ENCODE measurements at regions of chr1 and their contacts with region 1.

Region 1: GRCh38 chr1:28886731-28887418 is 27.5 kb upstream of the EPB41 start:
- DNase-seq: peak; percentile 92
- H3K4me3 Mint-ChIP-seq: peak overlapping the region; percentile 81
- H3K27ac Mint-ChIP-seq: peak overlapping the region; percentile 92
- H3K4me1 Mint-ChIP-seq: peaks cover 48% of the 10 kb centered on the region
- H3K27me3 Mint-ChIP-seq: no peaks in the 10 kb centered on the region

Region 2: DNA sequence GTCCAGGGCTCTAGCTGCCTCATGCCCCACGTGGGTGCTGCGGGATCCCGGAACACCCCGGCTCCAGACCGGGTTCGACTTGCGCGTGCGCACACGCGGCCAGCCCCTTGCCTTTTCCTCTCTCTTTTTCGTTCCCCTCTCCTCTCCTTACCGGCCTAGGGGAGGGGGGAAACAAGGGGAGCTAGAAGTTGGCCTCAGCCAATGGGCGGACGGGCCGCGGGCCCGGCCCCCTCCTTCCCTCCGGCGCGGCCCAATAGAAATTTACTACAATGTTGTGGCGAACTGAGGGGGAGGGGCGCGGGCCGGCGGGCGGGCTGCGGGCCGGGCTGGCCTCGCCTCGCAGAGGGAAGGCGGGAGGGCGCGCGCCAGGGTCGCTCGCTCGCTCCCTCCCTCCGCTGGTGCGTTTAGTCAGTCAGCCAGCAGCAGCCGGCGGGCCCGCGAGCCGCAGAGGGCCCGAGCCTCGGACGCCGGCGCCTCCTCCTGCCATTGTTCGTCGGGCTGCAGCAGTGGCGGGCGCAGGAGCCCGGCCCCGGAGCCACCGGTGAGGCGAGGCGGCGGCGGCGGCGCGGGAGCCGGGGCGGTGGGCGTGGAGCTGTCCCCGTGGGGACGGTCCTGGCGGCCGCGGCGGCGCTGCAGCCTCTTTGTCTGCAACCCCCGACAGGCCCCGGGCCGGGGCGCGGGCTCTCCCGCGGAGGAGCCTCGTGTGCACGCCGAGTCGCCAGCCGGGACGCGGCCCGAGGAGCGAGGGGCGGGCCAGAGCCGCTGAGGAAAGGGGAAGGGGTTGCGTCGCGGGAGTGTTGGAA is 27.6 kb after region 1 on chr1 and contains the start of gene EPB41:
- CTCF ChIA-PET with region 1: interaction called, 6 read pairs
- intact Hi-C with region 1: loop called (anchors 1 kb)
- DNase-seq: peak; percentile 93
- H3K4me3 Mint-ChIP-seq: peak within 1 kb of the TSS; percentile 90
- H3K27ac Mint-ChIP-seq: peak within 1 kb of the TSS; percentile 88
- H3K4me1 Mint-ChIP-seq: peaks cover 46% of the 10 kb centered on the region
- H3K27me3 Mint-ChIP-seq: no peaks in the 10 kb centered on the region
- total RNA-seq, gene EPB41: 97.4 to 100 TPM

Region 3: GRCh38 chr1:28965271-28965870 is 78.5 kb after region 1 on chr1:
- CTCF ChIA-PET with region 1: no interaction called
- intact Hi-C with region 1: loop called (anchors 1 kb)
- DNase-seq: no peak
- H3K4me3 Mint-ChIP-seq: no peak overlapping the region
- H3K27ac Mint-ChIP-seq: peak overlapping the region; percentile 41
- H3K4me1 Mint-ChIP-seq: peaks cover 63% of the 10 kb centered on the region
- H3K27me3 Mint-ChIP-seq: no peaks in the 10 kb centered on the region

Region 4: DNA sequence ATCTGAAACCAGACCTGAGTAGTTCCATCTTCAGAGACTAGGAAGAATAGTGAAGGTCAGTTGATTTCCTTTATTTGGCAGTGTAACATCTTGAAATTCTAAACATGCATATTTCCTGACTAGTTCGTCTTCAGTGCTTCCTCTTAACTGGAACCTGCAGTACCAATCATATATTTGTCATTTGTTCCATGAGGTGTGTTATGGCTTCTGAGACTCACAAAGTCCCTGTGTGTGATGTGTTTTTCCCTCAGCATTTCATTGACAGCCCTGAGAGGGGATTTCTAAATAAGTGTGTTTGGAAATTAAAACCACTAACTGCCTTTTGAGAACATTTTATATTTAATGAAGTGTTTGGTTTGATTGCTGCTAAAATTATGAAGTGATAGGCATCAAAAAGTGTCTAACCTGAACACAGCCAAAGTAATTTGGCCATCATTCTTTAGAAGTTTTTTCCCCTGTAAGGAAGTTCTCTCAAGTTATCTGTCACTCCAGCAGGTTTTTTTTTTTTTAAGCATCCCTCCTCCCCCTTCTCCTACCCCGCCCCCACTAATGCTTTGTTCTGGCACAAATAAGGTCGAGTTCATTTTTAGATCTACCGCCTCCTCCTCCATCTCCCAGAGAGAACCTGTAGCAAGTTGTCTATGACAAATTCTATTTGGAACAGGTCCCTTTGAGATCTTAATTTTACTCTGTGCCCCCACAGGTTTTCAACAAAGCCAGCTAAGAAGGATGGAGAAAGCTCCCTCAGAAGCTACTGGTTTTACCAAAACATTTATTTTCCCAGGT is 175.5 kb after region 1 on chr1:
- CTCF ChIA-PET with region 1: interaction called, 3 read pairs
- intact Hi-C with region 1: loop called (anchors 1 kb)
- DNase-seq: peak; percentile 72
- H3K4me3 Mint-ChIP-seq: peak overlapping the region; percentile 55
- H3K27ac Mint-ChIP-seq: peak overlapping the region; percentile 99
- H3K4me1 Mint-ChIP-seq: peaks cover 53% of the 10 kb centered on the region
- H3K27me3 Mint-ChIP-seq: no peaks in the 10 kb centered on the region

Region 5: DNA sequence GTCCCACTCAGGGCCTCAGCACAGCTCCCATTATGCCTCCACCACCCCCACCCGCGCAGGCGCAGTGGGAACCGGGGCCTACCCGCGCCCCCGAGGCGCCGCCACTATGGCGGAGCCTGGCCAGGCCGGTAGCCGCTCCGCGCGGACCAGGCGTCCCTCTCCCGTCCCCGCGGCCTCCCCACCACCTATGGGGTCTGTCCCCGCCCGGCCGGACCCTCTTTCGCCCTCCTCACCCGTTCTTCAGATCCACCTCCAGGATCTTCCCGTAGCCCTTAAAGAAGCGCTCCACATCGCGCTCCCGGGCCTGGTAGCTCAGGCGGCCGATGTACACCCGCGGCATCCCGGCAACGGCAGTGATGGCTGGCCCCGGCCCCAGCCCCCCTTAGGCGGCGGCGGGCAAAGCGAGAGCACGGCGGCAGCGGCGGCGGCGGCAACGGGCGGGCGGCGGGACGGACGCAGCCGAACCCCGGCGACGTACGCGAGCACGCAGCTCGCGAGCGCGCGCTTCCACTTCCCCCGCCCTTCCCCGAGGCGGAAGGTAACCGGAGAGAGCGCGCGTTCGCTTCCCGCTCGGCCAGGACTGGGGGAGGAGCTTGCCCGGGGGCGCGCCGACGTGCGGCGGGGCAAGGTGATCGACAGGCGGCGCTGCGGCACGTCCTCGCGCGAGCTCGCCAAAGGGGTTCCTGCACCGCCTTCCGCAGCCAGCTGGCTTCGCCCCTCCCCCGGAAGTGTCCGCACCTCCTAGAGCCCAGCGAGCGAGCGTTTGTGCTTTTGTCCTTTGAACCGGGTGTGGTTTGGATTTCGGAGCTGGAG is 294.7 kb after region 1 on chr1 and contains the start of gene SRSF4:
- CTCF ChIA-PET with region 1: interaction called, 9 read pairs
- intact Hi-C with region 1: loop called (anchors 1 kb)
- DNase-seq: peak; percentile 99
- H3K4me3 Mint-ChIP-seq: peak within 1 kb of the TSS; percentile 93
- H3K27ac Mint-ChIP-seq: peak within 1 kb of the TSS; percentile 98
- H3K4me1 Mint-ChIP-seq: peaks cover 37% of the 10 kb centered on the region
- H3K27me3 Mint-ChIP-seq: no peaks in the 10 kb centered on the region
- total RNA-seq, gene SRSF4: 166 to 170 TPM

Region 6: GRCh38 chr1:29202584-29203340 is 315.9 kb after region 1 on chr1:
- CTCF ChIA-PET with region 1: interaction called, 71 read pairs
- intact Hi-C with region 1: loop called (anchors 1 kb)
- DNase-seq: peak; percentile 97
- H3K4me3 Mint-ChIP-seq: no peak overlapping the region
- H3K27ac Mint-ChIP-seq: no peak overlapping the region
- H3K4me1 Mint-ChIP-seq: peaks cover 6% of the 10 kb centered on the region
- H3K27me3 Mint-ChIP-seq: no peaks in the 10 kb centered on the region